CD4-positive, alpha-beta T cell (primary cell): ENCODE measurements at regions of chr9 and their contacts with region 1.

Region 1: GRCh38 chr9:99104459-99105151 is at the start of gene TGFBR1:
- DNase-seq: peak; percentile 81 to 96 (median 88)
- ATAC-seq: peak; percentile 83
- H3K4me3 ChIP-seq: peak within 1 kb of the TSS; percentile 81
- H3K4me3 Mint-ChIP-seq: peak within 1 kb of the TSS; percentile 93
- H3K27ac ChIP-seq: peak within 1 kb of the TSS; percentile 65 to 74
- H3K27ac Mint-ChIP-seq: peak within 1 kb of the TSS; percentile 93
- H3K4me1 ChIP-seq: peaks cover 42% of the 10 kb centered on the region
- H3K4me1 Mint-ChIP-seq: peaks cover 60% of the 10 kb centered on the region
- H3K27me3 ChIP-seq: no peaks in the 10 kb centered on the region
- H3K27me3 Mint-ChIP-seq: no peaks in the 10 kb centered on the region
- CTCF ChIP-seq: no peak
- total RNA-seq, gene TGFBR1: 12.9 to 14.6 TPM

Region 2: GRCh38 chr9:98584059-98584458 is 520.5 kb before region 1 on chr9:
- CTCF ChIA-PET with region 1: no interaction called
- POLR2A ChIA-PET with region 1: no interaction called
- intact Hi-C with region 1: no loop called
- DNase-seq: no peak
- ATAC-seq: no peak
- H3K4me3 ChIP-seq: no peak overlapping the region
- H3K4me3 Mint-ChIP-seq: no peak overlapping the region
- H3K27ac ChIP-seq: no peak overlapping the region
- H3K27ac Mint-ChIP-seq: no peak overlapping the region
- H3K4me1 ChIP-seq: no peaks in the 10 kb centered on the region
- H3K4me1 Mint-ChIP-seq: no peaks in the 10 kb centered on the region
- H3K27me3 ChIP-seq: peaks cover 2 to 8% of the 10 kb centered on the region in 2 experiments
- H3K27me3 Mint-ChIP-seq: peaks cover 32% of the 10 kb centered on the region
- CTCF ChIP-seq: no peak

Region 3: GRCh38 chr9:99044827-99045226 is 59.8 kb before region 1 on chr9:
- CTCF ChIA-PET with region 1: no interaction called
- POLR2A ChIA-PET with region 1: no interaction called
- intact Hi-C with region 1: no loop called
- DNase-seq: no peak
- ATAC-seq: no peak
- H3K4me3 ChIP-seq: no peak overlapping the region
- H3K4me3 Mint-ChIP-seq: no peak overlapping the region
- H3K27ac ChIP-seq: no peak overlapping the region
- H3K27ac Mint-ChIP-seq: no peak overlapping the region
- H3K4me1 ChIP-seq: peaks cover 10% of the 10 kb centered on the region
- H3K4me1 Mint-ChIP-seq: peaks cover 18% of the 10 kb centered on the region
- H3K27me3 ChIP-seq: no peaks in the 10 kb centered on the region
- H3K27me3 Mint-ChIP-seq: no peaks in the 10 kb centered on the region
- CTCF ChIP-seq: no peak

Region 4: GRCh38 chr9:99057665-99058625 is 46.7 kb before region 1 on chr9:
- CTCF ChIA-PET with region 1: interaction called, 3 read pairs
- POLR2A ChIA-PET with region 1: interaction called, 58 read pairs
- intact Hi-C with region 1: loop called (anchors 1 to 2 kb)
- DNase-seq: peak; percentile 27 to 94 (median 60)
- ATAC-seq: peak; percentile 76
- H3K4me3 ChIP-seq: peak overlapping the region; percentile 47
- H3K4me3 Mint-ChIP-seq: peak overlapping the region; percentile 87
- H3K27ac ChIP-seq: peak overlapping the region in 1 of 2 donors; percentile 57
- H3K27ac Mint-ChIP-seq: peak overlapping the region; percentile 69
- H3K4me1 ChIP-seq: peaks cover 67% of the 10 kb centered on the region
- H3K4me1 Mint-ChIP-seq: peaks cover 76% of the 10 kb centered on the region
- H3K27me3 ChIP-seq: no peaks in the 10 kb centered on the region
- H3K27me3 Mint-ChIP-seq: no peaks in the 10 kb centered on the region
- CTCF ChIP-seq: no peak

Region 5: DNA sequence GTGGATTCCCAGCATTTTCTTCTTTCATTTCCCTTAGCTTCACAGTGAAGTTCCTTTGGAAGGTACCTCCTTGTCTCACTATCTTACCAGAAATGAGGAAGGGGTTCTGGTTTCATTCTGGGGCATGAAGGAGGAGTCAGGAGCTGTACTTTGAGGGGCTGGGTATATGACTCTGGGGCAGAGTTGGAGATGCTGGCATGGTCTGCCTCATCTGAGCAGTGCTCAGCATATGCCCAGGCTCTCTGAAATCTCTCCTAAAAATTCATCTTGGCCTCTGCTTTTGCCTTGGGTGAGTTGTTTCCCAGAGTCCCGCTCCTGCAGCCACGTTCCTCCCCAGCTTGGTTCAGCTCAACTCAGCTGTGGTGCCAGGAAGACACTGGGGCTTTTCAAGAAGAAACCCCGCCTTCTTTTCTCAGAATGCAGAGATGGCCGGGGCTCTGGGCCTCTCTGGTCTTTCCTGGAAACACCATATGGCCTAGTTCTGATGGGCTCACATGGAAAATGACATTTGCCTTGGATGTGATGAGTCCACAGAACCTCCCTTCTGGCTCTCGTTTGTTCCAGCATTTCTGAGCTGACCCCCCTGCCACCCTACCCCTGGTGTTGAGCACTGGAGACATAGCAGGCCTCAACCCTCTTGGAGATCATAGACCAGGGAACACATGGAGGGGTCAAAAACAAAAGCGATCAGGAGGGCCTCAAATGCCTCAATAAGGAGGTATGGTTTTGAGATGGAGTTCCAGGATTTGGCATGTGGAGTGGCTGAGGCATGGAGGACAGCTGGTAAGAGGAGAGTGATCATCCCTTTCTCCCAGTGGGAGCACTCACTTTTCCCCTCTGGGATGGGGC is 11.7 kb before region 1 on chr9:
- CTCF ChIA-PET with region 1: interaction called, 3 read pairs
- POLR2A ChIA-PET with region 1: interaction called, 14 read pairs
- intact Hi-C with region 1: no loop called
- DNase-seq: peak in 8 of 14 experiments; percentile 3 to 63 (median 28)
- ATAC-seq: no peak
- H3K4me3 ChIP-seq: no peak overlapping the region
- H3K4me3 Mint-ChIP-seq: no peak overlapping the region
- H3K27ac ChIP-seq: no peak overlapping the region
- H3K27ac Mint-ChIP-seq: no peak overlapping the region
- H3K4me1 ChIP-seq: peaks cover 34% of the 10 kb centered on the region
- H3K4me1 Mint-ChIP-seq: peaks cover 39% of the 10 kb centered on the region
- H3K27me3 ChIP-seq: no peaks in the 10 kb centered on the region
- H3K27me3 Mint-ChIP-seq: no peaks in the 10 kb centered on the region
- CTCF ChIP-seq: no peak

Region 6: DNA sequence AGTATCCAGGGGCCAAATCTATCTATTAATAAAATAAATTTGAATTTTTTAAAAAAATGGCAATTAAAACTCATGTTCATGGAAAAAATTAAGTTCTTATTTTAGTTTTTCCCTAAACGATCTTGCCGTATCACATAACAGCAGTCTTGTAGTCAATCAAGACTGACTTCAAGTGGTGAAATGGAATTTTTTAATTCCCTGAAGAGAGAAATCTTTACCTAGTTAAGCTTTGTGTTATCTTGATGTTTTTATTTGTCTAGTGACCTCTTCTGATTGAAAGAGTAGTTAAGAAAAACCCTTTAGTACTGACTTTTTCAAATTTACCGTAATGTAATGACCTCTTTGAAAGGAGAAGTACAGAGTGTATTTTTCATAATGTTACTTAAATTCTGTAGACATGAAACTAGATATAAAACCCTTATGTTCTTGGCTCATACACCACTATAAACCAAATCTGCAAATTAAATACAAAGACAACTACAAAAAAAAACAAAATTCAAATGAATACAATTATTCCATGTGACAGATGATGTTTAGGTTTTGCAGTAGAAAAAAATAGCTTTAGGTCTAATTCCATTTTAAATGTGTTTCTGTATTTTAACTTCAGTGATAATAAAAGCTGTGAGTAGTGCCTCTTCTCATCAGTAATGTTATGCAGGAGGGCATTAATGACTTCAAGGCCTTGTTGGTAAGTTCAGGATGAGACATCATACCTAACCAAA is 20.1 kb after region 1 on chr9:
- CTCF ChIA-PET with region 1: interaction called, 9 read pairs
- POLR2A ChIA-PET with region 1: interaction called, 52 read pairs
- intact Hi-C with region 1: loop called in 1 of 2 experiments (anchors 1 kb)
- DNase-seq: no peak
- ATAC-seq: no peak
- H3K4me3 ChIP-seq: no peak overlapping the region
- H3K4me3 Mint-ChIP-seq: peak overlapping the region; percentile 45
- H3K27ac ChIP-seq: no peak overlapping the region
- H3K27ac Mint-ChIP-seq: peak overlapping the region; percentile 13
- H3K4me1 ChIP-seq: peaks cover 29% of the 10 kb centered on the region
- H3K4me1 Mint-ChIP-seq: peaks cover 97% of the 10 kb centered on the region
- H3K27me3 ChIP-seq: no peaks in the 10 kb centered on the region
- H3K27me3 Mint-ChIP-seq: no peaks in the 10 kb centered on the region
- CTCF ChIP-seq: no peak

Region 7: DNA sequence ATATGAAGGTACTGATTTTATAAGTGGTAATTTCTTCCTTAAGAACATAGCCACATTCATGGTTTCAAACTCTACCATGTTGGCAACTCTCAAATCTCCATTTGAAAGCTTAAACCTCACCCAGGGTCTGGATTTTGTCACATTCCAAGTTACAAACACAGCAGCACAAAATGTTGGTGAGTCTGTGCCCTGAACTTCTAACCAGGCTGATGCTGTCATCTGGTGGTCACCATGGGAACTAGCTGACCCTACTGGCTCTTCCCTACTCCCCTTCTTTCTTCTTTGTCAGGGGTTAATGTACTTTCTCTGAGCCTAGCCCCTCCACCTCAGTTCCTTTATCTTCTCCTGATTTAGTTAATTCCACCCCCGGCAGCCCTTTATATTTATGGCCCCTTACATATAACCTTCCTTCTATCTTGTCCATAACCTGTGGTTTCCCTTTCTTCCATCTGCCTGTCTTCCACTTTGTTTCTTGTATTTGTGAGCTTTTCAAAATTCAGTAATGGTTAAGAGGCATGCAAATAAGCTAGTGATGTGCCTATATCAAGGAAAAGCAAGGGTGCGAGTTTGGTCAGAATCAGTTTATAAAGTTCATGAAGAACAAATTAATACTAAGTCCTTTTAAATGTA is 36.2 kb after region 1 on chr9:
- CTCF ChIA-PET with region 1: interaction called, 9 read pairs
- POLR2A ChIA-PET with region 1: interaction called, 73 read pairs
- intact Hi-C with region 1: loop called (anchors 1 to 2 kb)
- DNase-seq: peak; percentile 25 to 81 (median 44)
- ATAC-seq: peak; percentile 94
- H3K4me3 ChIP-seq: no peak overlapping the region
- H3K4me3 Mint-ChIP-seq: peak overlapping the region; percentile 0
- H3K27ac ChIP-seq: no peak overlapping the region
- H3K27ac Mint-ChIP-seq: peak overlapping the region; percentile 61
- H3K4me1 ChIP-seq: peaks cover 4% of the 10 kb centered on the region
- H3K4me1 Mint-ChIP-seq: peaks cover 42% of the 10 kb centered on the region
- H3K27me3 ChIP-seq: no peaks in the 10 kb centered on the region
- H3K27me3 Mint-ChIP-seq: no peaks in the 10 kb centered on the region
- CTCF ChIP-seq: peak; percentile 95